Activated naive CD4-positive, alpha-beta T cell treated with anti-CD3 and anti-CD28 coated beads, Interleukin-2, amount 10 ng/mL, durations not matched to agents 7 days and 5 days (primary cell): ENCODE measurements at regions of chr20 and their contacts with region 1.

Region 1: GRCh38 chr20:24100385-24101011 is 111.9 kb upstream of the GGTLC1 start:
- DNase-seq: peak; percentile 72
- H3K4me3 Mint-ChIP-seq: no peak overlapping the region
- H3K27ac Mint-ChIP-seq: no peak overlapping the region
- H3K4me1 Mint-ChIP-seq: peaks cover 13% of the 10 kb centered on the region
- H3K27me3 Mint-ChIP-seq: peaks cover 25% of the 10 kb centered on the region

Region 2: GRCh38 chr20:23937303-23938117 is 163.0 kb before region 1 on chr20:
- CTCF ChIA-PET with region 1: interaction called, 19 read pairs
- DNase-seq: peak; percentile 77
- H3K4me3 Mint-ChIP-seq: no peak overlapping the region
- H3K27ac Mint-ChIP-seq: no peak overlapping the region
- H3K4me1 Mint-ChIP-seq: no peaks in the 10 kb centered on the region
- H3K27me3 Mint-ChIP-seq: peaks cover 11% of the 10 kb centered on the region

Region 3: DNA sequence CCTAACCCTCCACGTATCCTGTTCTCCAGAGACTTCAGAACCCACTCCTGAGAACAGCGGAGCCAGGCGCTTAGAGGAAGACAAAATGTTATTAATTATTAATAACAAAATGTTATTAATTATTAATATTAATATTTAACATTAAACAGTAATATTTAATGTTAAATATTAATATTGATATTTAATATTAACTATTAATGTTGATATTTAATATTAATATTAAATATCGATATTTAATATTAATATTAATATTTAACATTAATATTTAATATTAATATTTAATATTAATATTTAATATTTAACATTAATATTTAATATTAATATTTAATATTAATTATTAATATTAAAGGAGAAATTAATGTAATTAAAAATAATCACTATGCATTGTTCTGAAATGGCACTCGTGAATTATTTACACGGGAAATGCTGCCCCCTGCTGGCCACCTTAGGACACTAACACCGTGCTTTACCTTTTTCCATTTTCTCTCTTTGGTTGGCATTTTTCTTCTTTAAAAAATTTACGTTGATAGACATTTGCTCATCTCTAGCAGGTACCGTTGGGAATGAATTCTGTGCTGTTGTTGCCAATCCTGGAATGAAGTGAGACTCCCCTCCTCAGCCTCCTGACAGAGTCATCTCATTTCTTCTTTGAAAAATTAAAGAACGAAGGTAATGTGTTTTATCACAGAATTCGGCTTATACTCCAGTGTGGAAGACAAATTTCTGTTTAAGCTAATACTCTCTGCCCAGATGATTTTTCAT is 104.4 kb before region 1 on chr20:
- CTCF ChIA-PET with region 1: interaction called, 13 read pairs
- DNase-seq: peak; percentile 76
- H3K4me3 Mint-ChIP-seq: no peak overlapping the region
- H3K27ac Mint-ChIP-seq: no peak overlapping the region
- H3K4me1 Mint-ChIP-seq: no peaks in the 10 kb centered on the region
- H3K27me3 Mint-ChIP-seq: peaks cover 31% of the 10 kb centered on the region

Region 4: DNA sequence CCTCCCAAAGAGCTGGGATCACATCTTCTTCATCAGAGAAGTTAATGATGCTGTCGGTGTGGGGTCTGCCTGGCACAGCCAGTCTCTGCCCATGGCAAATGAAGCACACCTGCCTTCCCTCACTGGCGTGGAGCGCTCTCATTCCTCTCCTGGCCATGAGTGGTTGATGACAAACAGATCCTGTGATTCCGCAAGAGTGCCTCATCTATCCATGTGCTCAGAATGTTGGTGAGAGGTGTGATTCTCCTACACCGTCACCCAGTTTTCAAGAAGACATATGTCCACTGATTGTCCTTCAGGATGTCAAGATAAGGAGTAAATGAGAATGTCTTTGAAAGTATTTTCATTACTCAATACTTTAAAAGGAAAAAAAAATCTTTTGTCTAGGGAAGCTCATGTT is 14.4 kb before region 1 on chr20:
- CTCF ChIA-PET with region 1: no interaction called
- DNase-seq: no peak
- H3K4me3 Mint-ChIP-seq: no peak overlapping the region
- H3K27ac Mint-ChIP-seq: no peak overlapping the region
- H3K4me1 Mint-ChIP-seq: no peaks in the 10 kb centered on the region
- H3K27me3 Mint-ChIP-seq: peaks cover 10% of the 10 kb centered on the region

Region 5: GRCh38 chr20:24781422-24781980 is 681.0 kb after region 1 on chr20:
- CTCF ChIA-PET with region 1: interaction called, 11 read pairs
- DNase-seq: peak; percentile 44
- H3K4me3 Mint-ChIP-seq: no peak overlapping the region
- H3K27ac Mint-ChIP-seq: no peak overlapping the region
- H3K4me1 Mint-ChIP-seq: peaks cover 23% of the 10 kb centered on the region
- H3K27me3 Mint-ChIP-seq: peaks cover 59% of the 10 kb centered on the region

Region 6: DNA sequence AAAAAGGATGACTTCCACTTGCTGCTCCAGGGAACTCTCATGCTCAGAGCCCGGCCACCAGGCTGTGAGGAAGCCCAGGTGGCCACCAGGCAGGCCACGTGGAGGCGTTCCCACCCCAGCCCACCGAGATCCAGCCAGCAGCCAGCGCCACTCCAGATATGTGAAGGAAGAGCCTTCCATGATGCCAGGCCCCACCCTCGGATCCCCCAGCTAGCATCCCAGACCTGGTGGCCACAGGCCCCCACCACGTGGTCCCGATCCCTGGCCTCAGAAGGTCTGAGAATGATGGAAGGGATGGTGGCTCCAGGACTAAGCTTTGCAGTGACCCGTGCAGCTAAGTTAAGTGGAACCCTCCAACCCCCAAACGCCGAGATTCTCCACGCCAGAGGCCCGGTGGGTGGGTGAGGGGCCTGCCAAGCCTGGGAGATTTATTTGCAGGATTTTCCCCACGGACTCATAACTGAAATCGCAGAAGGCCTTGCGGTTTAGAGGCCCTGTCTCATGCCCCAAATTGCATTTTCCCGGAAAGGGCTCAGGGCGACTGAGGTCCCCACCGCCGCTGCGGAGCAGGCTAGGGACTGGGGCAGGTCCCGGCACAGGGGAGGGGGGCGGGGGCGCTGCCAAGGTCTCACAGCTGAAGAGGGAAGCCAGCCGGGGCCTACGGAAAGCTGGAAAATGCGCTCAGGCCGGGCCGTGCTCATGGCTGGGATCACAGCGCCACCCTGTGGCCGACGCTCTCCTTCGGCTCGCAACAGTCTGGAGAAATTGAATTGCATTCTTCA is 817.5 kb after region 1 on chr20:
- CTCF ChIA-PET with region 1: interaction called, 17 read pairs
- DNase-seq: peak; percentile 66
- H3K4me3 Mint-ChIP-seq: no peak overlapping the region
- H3K27ac Mint-ChIP-seq: no peak overlapping the region
- H3K4me1 Mint-ChIP-seq: peaks cover 7% of the 10 kb centered on the region
- H3K27me3 Mint-ChIP-seq: peaks cover 39% of the 10 kb centered on the region